PC-3 (cell line): ENCODE measurements at regions of chr2 and their contacts with region 1.

Region 1: GRCh38 chr2:10122386-10123280 is at the start of gene RRM2:
- DNase-seq: peak; percentile 96
- ATAC-seq: peak; percentile 72
- H3K4me3 ChIP-seq: peak within 1 kb of the TSS; percentile 86
- H3K27ac ChIP-seq: peak within 1 kb of the TSS; percentile 95
- H3K4me1 ChIP-seq: peaks cover 42% of the 10 kb centered on the region
- H3K27me3 ChIP-seq: no peaks in the 10 kb centered on the region
- CTCF ChIP-seq: no peak
- total RNA-seq, gene RRM2: 229 and 282 TPM in 2 replicates

Region 2: DNA sequence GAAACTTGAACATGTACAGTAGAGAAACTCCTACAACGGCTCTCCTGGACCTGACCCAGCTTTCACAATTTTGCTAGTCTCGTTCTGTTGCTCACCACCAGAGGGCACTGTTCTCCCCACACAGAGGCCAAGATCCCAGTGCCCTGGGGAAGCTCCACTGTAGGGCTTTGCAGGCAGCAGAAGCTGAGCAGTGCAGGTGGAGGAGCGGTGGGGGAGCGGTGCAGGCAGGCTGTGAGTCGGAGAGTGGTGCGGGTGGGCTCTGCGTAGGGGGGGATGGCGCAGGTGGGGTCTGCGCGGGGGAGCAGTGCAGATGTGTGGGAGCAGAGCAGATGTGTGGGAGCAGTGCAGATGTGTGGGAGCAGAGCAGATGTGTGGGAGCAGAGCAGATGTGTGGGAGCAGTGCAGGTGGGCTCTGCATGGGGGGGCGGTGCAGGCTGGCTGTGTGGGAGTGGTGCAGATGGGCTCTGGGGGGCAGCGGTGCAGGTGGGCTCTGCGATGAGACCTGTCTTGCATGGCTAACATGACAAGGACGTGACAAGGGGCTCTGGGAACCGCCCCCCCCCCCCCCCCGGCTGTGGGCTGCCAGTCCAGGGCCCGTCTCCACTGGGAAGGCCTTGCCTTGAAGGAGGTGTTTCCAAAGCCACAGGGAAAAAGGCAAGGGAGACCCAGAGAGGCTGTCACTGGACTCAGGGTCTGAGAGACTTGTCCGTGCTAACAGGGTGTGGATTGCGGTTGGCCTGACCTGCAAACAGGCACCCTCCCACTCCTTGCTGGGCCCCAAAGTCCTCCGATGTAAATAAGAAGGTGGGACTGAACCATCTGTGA is 49.8 kb before region 1 on chr2:
- CTCF ChIA-PET with region 1: no interaction called
- POLR2A ChIA-PET with region 1: no interaction called
- intact Hi-C with region 1: loop called (anchors 2 kb)
- DNase-seq: peak; percentile 88
- ATAC-seq: peak; percentile 98
- H3K4me3 ChIP-seq: no peak overlapping the region
- H3K27ac ChIP-seq: no peak overlapping the region
- H3K4me1 ChIP-seq: no peaks in the 10 kb centered on the region
- H3K27me3 ChIP-seq: peaks cover 26% of the 10 kb centered on the region
- CTCF ChIP-seq: peak; percentile 90

Region 3: GRCh38 chr2:10302479-10303180 is 180.0 kb after region 1 on chr2 and contains the start of gene HPCAL1:
- CTCF ChIA-PET with region 1: interaction called, 4 read pairs
- POLR2A ChIA-PET with region 1: no interaction called
- intact Hi-C with region 1: loop called (anchors 5 kb)
- DNase-seq: peak; percentile 84
- ATAC-seq: peak; percentile 61
- H3K4me3 ChIP-seq: peak within 1 kb of the TSS; percentile 99
- H3K27ac ChIP-seq: peak within 1 kb of the TSS; percentile 68
- H3K4me1 ChIP-seq: peaks cover 65% of the 10 kb centered on the region
- H3K27me3 ChIP-seq: no peaks in the 10 kb centered on the region
- CTCF ChIP-seq: peak; percentile 54
- total RNA-seq, gene HPCAL1: 312 and 339 TPM in 2 replicates

Region 4: DNA sequence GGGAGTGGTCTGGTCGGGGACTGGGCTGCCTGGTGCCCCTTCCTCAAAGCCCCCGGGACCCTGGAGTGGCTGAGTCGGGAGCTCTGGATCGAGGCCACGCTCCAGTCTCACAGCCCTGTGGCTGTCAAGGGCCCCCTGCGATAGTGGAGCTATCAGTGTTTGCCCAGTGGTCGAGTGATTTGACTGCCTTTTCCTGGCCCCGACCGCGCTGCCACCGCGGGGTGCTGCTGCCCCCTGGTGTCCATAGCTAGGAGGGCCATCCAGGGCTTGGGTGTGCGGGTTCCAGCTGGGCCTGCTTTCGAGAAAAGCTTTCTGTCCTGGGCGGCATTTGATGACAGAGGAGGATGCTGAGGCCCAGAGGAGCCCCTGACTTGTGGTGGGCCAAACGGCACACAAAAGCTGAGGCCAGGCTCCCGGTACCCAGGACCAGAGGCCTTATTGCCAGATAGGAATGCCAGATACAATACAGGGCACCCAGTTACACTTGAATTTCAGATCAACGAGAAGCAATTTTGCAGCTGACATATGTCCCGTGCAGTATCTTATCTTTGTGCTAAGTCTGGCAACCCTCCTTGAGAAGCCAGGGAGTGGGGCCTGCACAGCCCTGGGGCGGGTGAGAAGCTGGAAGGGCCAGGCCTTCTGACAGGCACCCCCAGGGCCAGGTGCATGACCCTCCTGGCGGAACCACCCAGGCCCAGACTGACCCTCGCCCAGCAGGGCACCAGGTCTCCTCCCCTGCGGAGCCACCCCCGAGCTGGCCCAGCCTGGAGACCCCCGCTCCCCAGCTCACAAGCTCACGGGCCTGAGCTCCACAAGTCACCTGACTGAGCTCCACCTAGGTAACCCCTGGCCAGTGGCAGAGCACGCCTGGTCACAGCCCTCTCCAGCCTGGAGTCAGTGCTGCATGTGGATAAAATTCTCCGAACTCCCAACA is 312.5 kb after region 1 on chr2:
- CTCF ChIA-PET with region 1: interaction called, 18 read pairs
- POLR2A ChIA-PET with region 1: interaction called, 4 read pairs
- intact Hi-C with region 1: loop called (anchors 1 kb)
- DNase-seq: peak; percentile 81
- ATAC-seq: peak; percentile 60
- H3K4me3 ChIP-seq: no peak overlapping the region
- H3K27ac ChIP-seq: no peak overlapping the region
- H3K4me1 ChIP-seq: no peaks in the 10 kb centered on the region
- H3K27me3 ChIP-seq: no peaks in the 10 kb centered on the region
- CTCF ChIP-seq: peak; percentile 94

Region 5: GRCh38 chr2:10575609-10576280 is 453.1 kb after region 1 on chr2:
- CTCF ChIA-PET with region 1: no interaction called
- POLR2A ChIA-PET with region 1: no interaction called
- intact Hi-C with region 1: loop called (anchors 5 kb)
- DNase-seq: peak; percentile 94
- ATAC-seq: peak; percentile 91
- H3K4me3 ChIP-seq: 0 out of 2 replicates have a peak overlapping the region, but pooled peaks have one; percentile 3
- H3K27ac ChIP-seq: peak overlapping the region; percentile 97
- H3K4me1 ChIP-seq: peaks cover 27% of the 10 kb centered on the region
- H3K27me3 ChIP-seq: no peaks in the 10 kb centered on the region
- CTCF ChIP-seq: no peak

Region 6: DNA sequence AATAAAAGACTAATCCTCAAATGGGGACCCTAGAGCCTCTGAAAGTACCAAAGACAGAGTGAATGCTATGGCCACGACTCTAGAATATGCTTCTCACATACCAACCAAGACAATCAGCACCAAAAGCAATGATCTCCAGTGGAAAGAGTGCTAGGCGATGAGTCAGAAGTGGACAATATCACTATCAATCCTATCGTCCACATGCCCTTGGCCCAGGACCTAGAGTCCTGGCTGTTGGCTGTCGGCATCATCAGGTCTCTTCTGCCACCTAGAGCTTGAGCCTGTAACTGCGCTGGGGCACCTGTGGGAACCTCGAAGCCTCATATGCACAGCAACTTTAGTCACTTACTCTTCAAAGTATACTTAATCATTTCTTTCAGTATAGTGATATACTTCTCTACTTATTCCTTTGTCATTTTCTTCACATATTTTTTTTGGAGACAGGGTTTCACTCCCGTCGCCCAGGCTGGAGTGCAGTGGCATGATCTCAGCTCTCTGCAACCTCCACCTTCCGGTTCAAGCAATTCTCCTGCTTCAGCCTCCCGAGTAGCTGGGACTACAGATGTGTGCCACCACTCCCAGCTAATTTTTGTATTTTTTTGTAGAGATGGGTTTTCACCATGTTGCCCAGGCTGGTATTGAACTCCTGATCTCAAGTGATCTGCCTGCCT is 537.4 kb after region 1 on chr2:
- CTCF ChIA-PET with region 1: no interaction called
- POLR2A ChIA-PET with region 1: no interaction called
- intact Hi-C with region 1: loop called (anchors 2 kb)
- DNase-seq: peak; percentile 85
- ATAC-seq: peak; percentile 52
- H3K4me3 ChIP-seq: no peak overlapping the region
- H3K27ac ChIP-seq: peak overlapping the region; percentile 83
- H3K4me1 ChIP-seq: peaks cover 43% of the 10 kb centered on the region
- H3K27me3 ChIP-seq: no peaks in the 10 kb centered on the region
- CTCF ChIP-seq: peak; percentile 89

Region 7: DNA sequence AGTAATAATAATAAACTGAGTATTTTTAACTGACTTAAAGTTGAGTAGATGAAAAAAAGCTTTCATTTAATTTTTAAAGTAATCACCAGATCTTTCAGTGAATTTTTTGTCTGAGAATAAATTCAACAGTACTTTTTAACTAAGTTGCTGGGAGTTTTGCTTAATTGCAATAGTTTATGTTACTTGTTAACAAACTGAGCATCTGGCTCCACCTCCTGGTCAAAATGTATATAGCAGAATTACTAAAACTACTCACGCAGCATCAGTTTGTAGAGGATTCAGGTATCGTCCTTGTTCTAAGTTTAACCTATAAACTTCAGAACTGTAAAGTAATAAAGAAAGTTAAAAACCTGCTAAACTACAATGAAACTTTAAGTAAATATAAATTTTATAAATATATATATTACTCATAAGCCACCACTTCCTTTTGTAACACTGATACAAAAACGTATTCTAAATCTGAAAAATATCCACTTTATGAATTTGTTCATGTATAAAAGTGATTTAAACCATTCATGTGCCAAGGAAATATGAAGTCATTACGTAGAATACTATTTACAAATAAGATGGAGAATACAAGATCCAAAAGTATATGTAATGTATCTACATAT is 545.9 kb after region 1 on chr2:
- CTCF ChIA-PET with region 1: no interaction called
- POLR2A ChIA-PET with region 1: no interaction called
- intact Hi-C with region 1: loop called (anchors 2 kb)
- DNase-seq: peak; percentile 87
- ATAC-seq: peak; percentile 63; the same call in 1 of the 2 replicates
- H3K4me3 ChIP-seq: no peak overlapping the region
- H3K27ac ChIP-seq: no peak overlapping the region
- H3K4me1 ChIP-seq: no peaks in the 10 kb centered on the region
- H3K27me3 ChIP-seq: no peaks in the 10 kb centered on the region
- CTCF ChIP-seq: peak; percentile 73